PC-3 (cell line): ENCODE measurements at regions of chr2 and their contacts with region 1.

Region 1: GRCh38 chr2:137969418-137969765 is 5.1 kb downstream of the HNMT start:
- DNase-seq: peak; percentile 94
- ATAC-seq: peak; percentile 89
- H3K4me3 ChIP-seq: no peak overlapping the region
- H3K27ac ChIP-seq: peak overlapping the region; percentile 75
- H3K4me1 ChIP-seq: peaks cover 46% of the 10 kb centered on the region
- H3K27me3 ChIP-seq: no peaks in the 10 kb centered on the region
- CTCF ChIP-seq: no peak

Region 2: GRCh38 chr2:137823196-137823595 is 146.2 kb before region 1 on chr2:
- CTCF ChIA-PET with region 1: no interaction called
- POLR2A ChIA-PET with region 1: no interaction called
- intact Hi-C with region 1: no loop called
- DNase-seq: no peak
- ATAC-seq: no peak
- H3K4me3 ChIP-seq: no peak overlapping the region
- H3K27ac ChIP-seq: no peak overlapping the region
- H3K4me1 ChIP-seq: no peaks in the 10 kb centered on the region
- H3K27me3 ChIP-seq: peaks cover 18% of the 10 kb centered on the region; the same call in 1 of the 2 replicates
- CTCF ChIP-seq: no peak

Region 3: DNA sequence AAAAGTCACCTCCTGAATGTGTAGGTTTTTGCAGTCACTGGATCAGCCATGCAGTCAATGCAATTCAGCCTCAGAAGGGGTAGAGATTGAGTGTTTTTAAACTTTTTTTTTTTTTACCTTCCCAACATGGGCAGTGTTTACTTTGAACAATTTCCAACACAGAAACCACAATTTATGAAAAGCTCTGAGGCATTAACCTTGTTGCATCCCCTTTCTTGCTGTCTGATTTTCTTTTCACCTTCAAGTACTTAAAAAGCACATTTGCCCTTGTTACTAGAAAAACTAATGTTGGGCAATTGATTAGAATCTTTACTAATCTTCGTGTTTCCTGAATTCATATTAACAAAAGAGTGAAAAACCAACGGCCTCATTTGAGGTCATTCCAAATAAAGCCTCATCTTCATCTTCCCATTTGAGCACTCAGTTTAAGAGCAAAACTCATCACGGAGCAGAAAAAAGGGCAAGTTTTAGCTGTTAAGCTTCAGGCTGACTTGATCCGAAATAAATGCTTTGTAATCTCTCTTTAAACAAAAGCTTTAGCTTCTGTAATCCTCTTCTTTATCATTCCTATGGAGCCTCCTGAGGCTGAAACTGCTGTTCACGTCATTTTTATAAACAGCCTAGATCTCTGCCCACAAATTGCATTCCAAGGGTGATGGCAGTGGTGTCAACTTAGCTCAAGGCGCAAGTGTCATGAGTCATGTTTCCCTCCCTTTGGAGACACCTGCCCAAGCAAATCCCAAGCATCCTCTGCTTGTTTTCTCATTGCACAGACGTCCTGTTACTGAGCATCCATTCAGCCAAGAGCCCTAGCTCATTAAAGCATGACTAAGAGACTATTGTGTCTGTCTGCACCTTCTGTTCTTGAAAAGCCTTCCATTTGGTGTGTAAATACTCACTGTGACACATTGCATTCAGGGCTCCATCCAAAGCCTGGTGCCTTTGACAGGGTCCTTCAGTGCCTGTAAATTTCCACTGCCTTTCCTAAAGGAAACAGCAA is 102.6 kb after region 1 on chr2:
- CTCF ChIA-PET with region 1: no interaction called
- POLR2A ChIA-PET with region 1: no interaction called
- intact Hi-C with region 1: loop called (anchors 5 kb)
- DNase-seq: peak; percentile 97
- ATAC-seq: peak; percentile 95
- H3K4me3 ChIP-seq: peak overlapping the region; percentile 43; the same call in 1 of the 2 replicates
- H3K27ac ChIP-seq: peak overlapping the region; percentile 90
- H3K4me1 ChIP-seq: peaks cover 24% of the 10 kb centered on the region
- H3K27me3 ChIP-seq: no peaks in the 10 kb centered on the region
- CTCF ChIP-seq: no peak

Region 4: DNA sequence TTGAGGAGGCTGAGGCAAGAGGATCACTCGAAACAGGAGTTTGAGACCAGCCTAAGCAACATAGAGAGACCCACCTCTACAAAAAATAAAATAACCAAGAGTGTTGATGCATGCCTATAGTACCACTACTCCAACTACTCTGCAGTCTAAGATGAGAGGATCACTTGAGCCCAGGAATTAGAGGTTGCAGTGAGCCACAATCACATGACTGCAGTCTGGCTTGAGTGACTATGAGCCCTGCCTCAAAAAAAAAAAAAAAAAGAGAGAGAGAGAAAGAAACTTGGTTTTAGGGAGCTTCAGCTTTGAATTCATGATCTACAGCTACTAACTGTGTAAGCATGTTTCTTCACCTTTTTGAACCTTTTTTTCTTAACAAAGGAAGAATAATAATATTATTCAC is 114.8 kb after region 1 on chr2:
- CTCF ChIA-PET with region 1: no interaction called
- POLR2A ChIA-PET with region 1: interaction called, 3 read pairs
- intact Hi-C with region 1: loop called (anchors 2 kb)
- DNase-seq: no peak
- ATAC-seq: no peak
- H3K4me3 ChIP-seq: no peak overlapping the region
- H3K27ac ChIP-seq: no peak overlapping the region
- H3K4me1 ChIP-seq: peaks cover 37% of the 10 kb centered on the region
- H3K27me3 ChIP-seq: no peaks in the 10 kb centered on the region
- CTCF ChIP-seq: no peak

Region 5: GRCh38 chr2:138275881-138276280 is 306.5 kb after region 1 on chr2:
- CTCF ChIA-PET with region 1: no interaction called
- POLR2A ChIA-PET with region 1: no interaction called
- intact Hi-C with region 1: loop called (anchors 2 kb)
- DNase-seq: peak; percentile 88
- ATAC-seq: peak; percentile 91
- H3K4me3 ChIP-seq: peak overlapping the region; percentile 18; the same call in 1 of the 2 replicates
- H3K27ac ChIP-seq: peak overlapping the region; percentile 95
- H3K4me1 ChIP-seq: peaks cover 25% of the 10 kb centered on the region
- H3K27me3 ChIP-seq: no peaks in the 10 kb centered on the region
- CTCF ChIP-seq: no peak

Region 6: DNA sequence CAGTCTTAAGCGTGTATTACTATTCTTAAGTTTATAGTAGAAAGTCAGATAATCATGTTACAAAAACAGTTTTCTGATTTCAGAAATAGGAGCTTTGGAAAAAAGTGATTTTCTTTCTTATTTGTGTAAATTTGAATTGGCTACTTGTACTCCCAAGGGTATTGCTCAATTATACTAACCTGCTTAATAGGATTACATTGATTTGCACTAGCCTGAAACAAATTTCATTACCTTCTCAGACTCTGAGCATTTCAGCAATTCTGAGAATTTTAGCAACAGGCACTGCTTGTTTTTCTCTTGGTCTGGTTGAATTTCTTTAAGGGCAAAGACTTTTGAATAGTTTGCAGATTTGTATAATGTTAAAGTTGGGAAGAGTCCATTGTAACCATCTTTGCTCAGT is 897.9 kb after region 1 on chr2:
- CTCF ChIA-PET with region 1: no interaction called
- POLR2A ChIA-PET with region 1: no interaction called
- intact Hi-C with region 1: no loop called
- DNase-seq: no peak
- ATAC-seq: no peak
- H3K4me3 ChIP-seq: no peak overlapping the region
- H3K27ac ChIP-seq: no peak overlapping the region
- H3K4me1 ChIP-seq: 0 out of 2 replicates have a peak, but pooled peaks cover 5% of the 10 kb centered on the region
- H3K27me3 ChIP-seq: no peaks in the 10 kb centered on the region
- CTCF ChIP-seq: no peak